CD4-positive, alpha-beta T cell (primary cell): ENCODE measurements at regions of chr11 and their contacts with region 1.

Region 1: DNA sequence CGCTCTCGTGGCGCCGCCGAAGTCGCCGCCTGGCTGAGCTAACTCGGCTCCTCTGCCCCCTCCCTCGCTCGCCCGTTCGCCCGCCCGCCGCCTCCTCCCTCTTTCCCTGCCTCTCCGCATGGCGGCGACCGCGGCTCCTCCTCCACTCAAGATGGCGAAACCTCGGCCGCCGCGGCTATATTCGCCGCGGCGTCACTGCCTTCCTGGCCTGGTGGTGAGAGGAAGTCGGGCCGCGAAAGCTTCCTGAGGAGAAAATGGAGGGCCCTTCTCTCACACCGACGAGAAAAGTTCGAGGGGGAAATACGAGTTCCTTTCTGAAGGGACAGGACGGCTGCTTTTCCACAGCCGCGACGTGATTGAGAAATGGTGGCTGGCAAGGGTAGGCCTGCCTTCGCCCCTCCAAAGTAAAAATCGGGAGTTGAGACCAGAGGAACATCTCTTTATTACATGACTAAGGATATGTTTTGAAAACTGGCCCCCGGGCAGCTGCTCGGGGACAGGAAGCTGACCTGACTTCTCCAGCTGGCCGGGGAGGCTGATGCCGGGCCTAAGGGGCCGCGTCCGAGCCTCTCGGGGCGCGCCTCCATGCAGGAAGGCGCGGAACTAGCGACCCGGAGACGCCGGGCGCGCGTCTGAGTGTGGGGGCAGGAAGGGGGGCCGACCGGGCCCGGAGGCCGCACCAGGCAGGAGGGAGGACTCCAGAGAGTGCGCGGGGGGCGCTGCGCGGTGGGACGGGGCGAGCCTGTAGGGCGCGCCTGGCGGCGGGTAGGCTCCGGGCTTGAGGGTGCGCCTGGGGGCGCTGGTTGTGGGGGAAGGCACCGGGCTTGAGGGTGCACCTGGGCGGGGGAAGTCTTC is at the start of gene DDX6:
- DNase-seq: peak; percentile 87 to 95 (median 90)
- ATAC-seq: peak; percentile 61
- H3K4me3 ChIP-seq: peak within 1 kb of the TSS; percentile 94
- H3K4me3 Mint-ChIP-seq: peak within 1 kb of the TSS; percentile 96
- H3K27ac ChIP-seq: peak within 1 kb of the TSS; percentile 94 to 98
- H3K27ac Mint-ChIP-seq: peak within 1 kb of the TSS; percentile 95
- H3K4me1 ChIP-seq: peaks cover 36% of the 10 kb centered on the region
- H3K4me1 Mint-ChIP-seq: peaks cover 26% of the 10 kb centered on the region
- H3K27me3 ChIP-seq: no peaks in the 10 kb centered on the region
- H3K27me3 Mint-ChIP-seq: no peaks in the 10 kb centered on the region
- CTCF ChIP-seq: no peak
- total RNA-seq, gene DDX6: 341 to 355 TPM

Region 2: DNA sequence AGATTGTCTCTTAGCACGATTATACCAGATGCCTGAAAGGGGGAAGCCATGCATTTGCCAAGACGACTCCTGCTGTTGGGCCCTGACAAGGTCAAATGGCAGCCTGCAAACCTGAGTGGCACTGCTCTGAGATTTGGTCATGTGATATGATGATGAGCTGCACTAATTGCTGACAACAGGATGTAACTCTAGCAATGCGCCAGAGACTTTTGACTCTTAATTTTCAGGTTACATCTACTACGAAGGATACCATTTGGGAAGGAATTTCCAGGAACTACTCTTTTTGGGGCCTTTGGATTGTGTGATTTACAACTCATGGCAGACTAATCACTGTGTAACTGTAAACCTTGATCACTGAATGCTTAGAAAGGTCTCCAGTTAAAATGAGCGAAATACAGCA is 125.0 kb before region 1 on chr11:
- CTCF ChIA-PET with region 1: no interaction called
- POLR2A ChIA-PET with region 1: no interaction called
- intact Hi-C with region 1: no loop called
- DNase-seq: peak in 1 of 14 experiments; percentile 12
- ATAC-seq: peak; percentile 54
- H3K4me3 ChIP-seq: no peak overlapping the region
- H3K4me3 Mint-ChIP-seq: no peak overlapping the region
- H3K27ac ChIP-seq: no peak overlapping the region
- H3K27ac Mint-ChIP-seq: no peak overlapping the region
- H3K4me1 ChIP-seq: peaks cover 2% of the 10 kb centered on the region
- H3K4me1 Mint-ChIP-seq: no peaks in the 10 kb centered on the region
- H3K27me3 ChIP-seq: no peaks in the 10 kb centered on the region
- H3K27me3 Mint-ChIP-seq: peaks cover under 1% of the 10 kb centered on the region
- CTCF ChIP-seq: no peak

Region 3: DNA sequence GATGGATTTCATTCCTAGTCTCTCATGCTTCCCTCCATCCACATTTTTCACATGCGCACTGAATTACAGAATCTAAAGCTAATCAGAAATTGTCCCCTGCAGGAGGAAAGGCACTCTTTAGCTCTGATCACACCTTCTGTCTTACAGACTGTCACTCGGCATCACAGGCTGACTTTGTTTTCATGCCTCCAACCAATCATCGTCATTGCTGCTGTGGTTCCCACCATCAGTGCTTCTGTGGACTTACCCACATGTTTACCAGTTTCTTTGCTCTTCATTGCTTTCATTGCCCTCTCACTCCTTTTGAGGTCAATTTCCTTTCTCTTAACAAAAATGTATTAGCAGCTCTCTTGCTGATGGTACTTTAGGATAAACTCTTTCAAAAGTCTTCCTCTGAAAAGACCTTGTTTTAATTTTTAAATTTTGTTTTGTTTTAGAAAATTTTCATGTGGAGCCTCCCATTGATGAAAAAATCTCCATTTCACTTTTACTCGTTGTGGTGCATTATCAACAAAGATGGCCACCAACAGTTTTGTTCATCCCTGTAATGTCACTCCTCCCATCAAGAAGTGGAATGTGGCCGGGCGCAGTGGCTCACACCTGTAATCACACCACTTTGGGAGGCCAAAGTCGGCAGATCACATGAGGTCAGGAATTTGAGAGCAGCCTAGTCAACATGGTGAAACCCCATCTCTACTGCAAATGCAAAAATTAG is 91.7 kb before region 1 on chr11:
- CTCF ChIA-PET with region 1: interaction called, 3 read pairs
- POLR2A ChIA-PET with region 1: interaction called, 50 read pairs
- intact Hi-C with region 1: loop called in 1 of 2 experiments (anchors 5 kb)
- DNase-seq: peak; percentile 48 to 95 (median 60)
- ATAC-seq: peak; percentile 97
- H3K4me3 ChIP-seq: no peak overlapping the region
- H3K4me3 Mint-ChIP-seq: peak overlapping the region; percentile 68
- H3K27ac ChIP-seq: peak overlapping the region; percentile 48 to 65
- H3K27ac Mint-ChIP-seq: peak overlapping the region; percentile 97
- H3K4me1 ChIP-seq: peaks cover 71% of the 10 kb centered on the region
- H3K4me1 Mint-ChIP-seq: peaks cover 56% of the 10 kb centered on the region
- H3K27me3 ChIP-seq: no peaks in the 10 kb centered on the region
- H3K27me3 Mint-ChIP-seq: no peaks in the 10 kb centered on the region
- CTCF ChIP-seq: no peak

Region 4: DNA sequence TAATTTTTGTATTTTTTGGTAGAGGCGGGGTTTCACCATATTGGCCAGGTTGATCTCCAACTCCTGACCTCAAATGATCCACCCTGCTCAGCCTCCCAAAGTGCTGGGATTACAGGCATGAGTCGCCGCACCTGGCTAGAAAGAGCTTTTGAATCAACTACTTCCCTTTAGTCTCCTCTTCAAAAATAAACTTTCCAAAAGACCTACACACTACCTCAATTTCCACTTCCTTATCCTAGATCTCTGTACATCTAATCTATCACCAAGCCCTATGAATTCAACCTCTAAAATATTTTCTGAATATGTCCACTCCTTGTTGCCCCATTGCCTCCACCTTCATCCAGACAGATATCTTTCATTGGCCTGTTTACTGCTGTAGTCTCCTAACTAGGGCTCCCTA is 12.8 kb after region 1 on chr11:
- CTCF ChIA-PET with region 1: interaction called, 4 read pairs
- POLR2A ChIA-PET with region 1: interaction called, 25 read pairs
- intact Hi-C with region 1: no loop called
- DNase-seq: no peak
- ATAC-seq: no peak
- H3K4me3 ChIP-seq: no peak overlapping the region
- H3K4me3 Mint-ChIP-seq: no peak overlapping the region
- H3K27ac ChIP-seq: no peak overlapping the region
- H3K27ac Mint-ChIP-seq: no peak overlapping the region
- H3K4me1 ChIP-seq: no peaks in the 10 kb centered on the region
- H3K4me1 Mint-ChIP-seq: peaks cover 8% of the 10 kb centered on the region
- H3K27me3 ChIP-seq: no peaks in the 10 kb centered on the region
- H3K27me3 Mint-ChIP-seq: no peaks in the 10 kb centered on the region
- CTCF ChIP-seq: no peak

Region 5: DNA sequence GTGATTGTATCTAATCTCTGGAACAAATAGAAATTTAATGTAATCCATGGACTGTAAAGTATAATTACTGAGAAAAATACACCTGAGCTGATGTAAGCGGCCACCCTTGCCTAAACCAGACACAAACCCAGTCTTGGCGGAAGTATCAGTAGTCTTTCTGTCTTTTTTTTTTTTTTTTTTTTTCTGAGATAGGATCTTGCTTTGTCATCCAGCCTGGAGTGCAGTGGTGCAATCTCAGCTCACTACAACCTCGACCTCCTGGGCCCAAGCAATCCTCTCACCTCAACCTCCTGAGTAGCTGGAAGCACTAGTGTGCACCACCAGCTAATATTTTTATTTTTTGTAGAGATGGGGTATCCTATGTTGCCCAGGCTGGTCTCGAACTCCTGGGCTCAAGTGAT is 86.8 kb after region 1 on chr11:
- CTCF ChIA-PET with region 1: interaction called, 12 read pairs
- POLR2A ChIA-PET with region 1: interaction called, 245 read pairs
- intact Hi-C with region 1: loop called in 1 of 2 experiments (anchors 2 kb)
- DNase-seq: peak in 7 of 14 experiments; percentile 35 to 79 (median 50)
- ATAC-seq: peak; percentile 28
- H3K4me3 ChIP-seq: no peak overlapping the region
- H3K4me3 Mint-ChIP-seq: peak overlapping the region; percentile 84
- H3K27ac ChIP-seq: peak overlapping the region; percentile 83 to 90
- H3K27ac Mint-ChIP-seq: peak overlapping the region; percentile 95
- H3K4me1 ChIP-seq: peaks cover 95% of the 10 kb centered on the region
- H3K4me1 Mint-ChIP-seq: peaks cover 92% of the 10 kb centered on the region
- H3K27me3 ChIP-seq: no peaks in the 10 kb centered on the region
- H3K27me3 Mint-ChIP-seq: no peaks in the 10 kb centered on the region
- CTCF ChIP-seq: no peak

Region 6: DNA sequence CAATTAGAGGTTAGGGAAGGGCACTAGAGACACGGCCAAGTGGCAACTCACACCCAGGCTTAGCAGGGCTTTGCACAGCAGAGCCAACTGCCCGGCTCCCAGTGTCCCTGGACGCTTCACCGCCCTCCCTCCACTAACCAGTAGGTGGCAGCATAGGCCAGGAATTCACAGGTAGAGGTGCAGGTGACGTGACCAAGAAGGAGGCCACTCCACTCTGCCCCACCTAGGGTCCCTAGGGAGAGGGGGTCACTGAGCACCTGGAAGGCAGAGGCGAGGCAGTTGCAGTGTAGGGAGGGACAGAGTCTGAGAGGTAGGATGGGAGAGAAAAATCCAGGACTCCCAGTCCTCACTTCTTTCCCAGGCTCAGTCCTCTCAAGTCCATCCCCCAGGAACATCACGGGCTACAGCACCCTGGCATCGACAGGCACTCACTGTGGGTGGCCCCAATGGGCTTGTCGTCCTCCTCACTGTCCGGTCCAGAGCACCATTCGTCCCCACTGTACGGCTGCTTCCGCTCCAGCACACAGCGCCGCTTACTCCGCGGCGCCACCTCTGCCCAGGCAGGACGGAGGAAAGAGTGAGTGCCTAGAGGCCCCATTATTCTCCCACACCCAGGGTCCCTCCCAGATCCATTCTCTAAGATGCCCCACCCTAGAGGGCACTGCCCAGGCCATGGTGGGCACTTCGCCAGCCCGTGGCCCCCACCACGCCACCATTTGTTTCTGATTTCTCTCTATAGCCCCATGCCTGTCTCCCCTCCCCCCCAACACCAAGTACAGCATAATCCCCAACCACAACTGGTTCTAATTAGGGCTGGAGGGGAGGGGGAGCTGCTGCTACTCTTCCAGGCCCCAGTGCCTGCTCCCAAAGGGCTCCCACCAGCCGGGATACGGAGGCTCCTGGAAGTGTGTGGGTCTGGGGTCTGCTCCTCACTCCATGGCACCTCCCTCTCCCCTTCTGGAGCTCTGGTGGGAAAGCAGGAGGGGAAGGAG is 116.0 kb after region 1 on chr11:
- CTCF ChIA-PET with region 1: interaction called, 5 read pairs
- POLR2A ChIA-PET with region 1: interaction called, 157 read pairs
- intact Hi-C with region 1: no loop called
- DNase-seq: peak; percentile 78 to 91 (median 86)
- ATAC-seq: peak; percentile 41
- H3K4me3 ChIP-seq: no peak overlapping the region
- H3K4me3 Mint-ChIP-seq: peak overlapping the region; percentile 77
- H3K27ac ChIP-seq: peak overlapping the region; percentile 22 to 49
- H3K27ac Mint-ChIP-seq: peak overlapping the region; percentile 100
- H3K4me1 ChIP-seq: peaks cover 60% of the 10 kb centered on the region
- H3K4me1 Mint-ChIP-seq: peaks cover 48% of the 10 kb centered on the region
- H3K27me3 ChIP-seq: no peaks in the 10 kb centered on the region
- H3K27me3 Mint-ChIP-seq: no peaks in the 10 kb centered on the region
- CTCF ChIP-seq: peak; percentile 88